GM10248 (cell line): ENCODE measurements at regions of chr6 and their contacts with region 1.

Region 1: GRCh38 chr6:26596579-26597388 is at the start of gene ABT1:
- DNase-seq: peak; percentile 96
- CTCF ChIP-seq: no peak

Region 2: DNA sequence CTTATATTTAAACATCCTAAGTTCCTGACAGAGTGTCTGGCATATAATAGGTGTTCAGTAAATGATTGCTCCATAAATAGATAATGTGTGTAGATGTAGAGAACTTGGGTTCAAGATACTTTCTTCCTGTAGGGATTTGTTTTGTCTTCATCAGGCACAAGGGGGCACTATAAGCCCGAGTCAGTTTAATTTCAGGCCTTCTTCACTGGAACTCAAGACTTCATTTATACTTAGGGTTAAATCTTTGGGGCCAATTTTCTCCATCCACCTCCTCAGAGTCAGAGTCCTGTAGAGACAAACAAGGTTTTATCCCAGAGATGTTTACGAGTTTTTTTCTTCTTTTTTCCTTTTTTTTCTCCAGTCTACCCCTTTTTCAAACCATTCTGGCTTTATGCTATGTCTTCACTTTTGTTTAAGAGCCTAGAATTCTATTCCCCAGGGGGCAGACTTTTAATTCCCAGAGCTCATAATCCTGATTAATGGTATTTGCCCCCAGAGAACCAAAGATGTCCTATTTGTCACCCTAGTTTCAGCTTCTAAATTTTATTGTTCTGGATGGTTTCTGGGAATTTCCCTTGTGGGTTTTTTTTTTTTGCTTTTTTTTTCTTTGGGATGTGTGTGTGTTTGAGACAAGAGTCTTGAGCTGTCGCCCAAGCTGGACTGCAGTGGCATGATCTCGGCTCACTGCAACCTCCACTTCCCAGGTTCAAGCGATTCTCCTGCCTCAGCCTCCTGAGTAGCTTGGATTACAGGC is 421.2 kb before region 1 on chr6:
- CTCF ChIA-PET with region 1: interaction called, 11 read pairs
- POLR2A ChIA-PET with region 1: no interaction called
- DNase-seq: peak; percentile 59
- CTCF ChIP-seq: peak; percentile 59

Region 3: DNA sequence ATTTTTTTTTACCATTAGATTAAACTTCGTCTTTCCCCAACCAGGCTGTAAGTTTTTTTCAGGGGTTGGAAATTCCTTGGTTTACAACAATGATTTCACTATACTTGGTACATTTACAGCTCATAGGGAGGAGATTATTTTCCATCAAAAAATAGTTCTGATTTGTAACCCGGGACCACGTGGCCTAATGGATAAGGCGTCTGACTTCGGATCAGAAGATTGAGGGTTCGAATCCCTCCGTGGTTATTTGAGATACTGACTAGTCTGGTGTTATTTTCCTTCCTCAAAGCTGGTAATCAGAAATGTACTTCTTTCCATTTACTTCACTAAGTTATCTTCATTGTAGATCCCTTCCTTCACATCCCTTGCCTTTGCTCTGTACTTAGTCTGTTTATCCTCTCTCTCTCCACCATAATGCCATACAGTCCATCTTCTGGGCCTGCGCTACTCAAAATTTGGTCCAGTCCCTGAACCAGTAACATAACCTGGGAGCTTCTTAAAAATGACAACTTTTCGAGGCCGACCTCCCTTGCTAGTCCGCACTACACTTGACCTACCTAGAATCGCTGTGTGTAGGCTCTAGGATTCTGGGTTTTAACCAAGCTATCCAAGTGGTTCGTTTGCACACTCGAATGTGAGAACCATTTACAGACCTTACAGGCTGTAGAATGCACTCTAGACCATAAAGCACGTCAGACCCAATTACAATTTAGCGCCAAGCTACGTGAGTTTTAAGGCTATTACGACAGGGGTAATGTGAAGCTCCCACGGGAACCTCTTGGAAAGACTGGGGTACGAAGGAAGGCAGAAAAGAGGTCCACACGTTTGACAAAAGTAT is 273.9 kb before region 1 on chr6:
- CTCF ChIA-PET with region 1: interaction called, 10 read pairs
- POLR2A ChIA-PET with region 1: no interaction called
- DNase-seq: peak; percentile 37
- CTCF ChIP-seq: no peak

Region 4: DNA sequence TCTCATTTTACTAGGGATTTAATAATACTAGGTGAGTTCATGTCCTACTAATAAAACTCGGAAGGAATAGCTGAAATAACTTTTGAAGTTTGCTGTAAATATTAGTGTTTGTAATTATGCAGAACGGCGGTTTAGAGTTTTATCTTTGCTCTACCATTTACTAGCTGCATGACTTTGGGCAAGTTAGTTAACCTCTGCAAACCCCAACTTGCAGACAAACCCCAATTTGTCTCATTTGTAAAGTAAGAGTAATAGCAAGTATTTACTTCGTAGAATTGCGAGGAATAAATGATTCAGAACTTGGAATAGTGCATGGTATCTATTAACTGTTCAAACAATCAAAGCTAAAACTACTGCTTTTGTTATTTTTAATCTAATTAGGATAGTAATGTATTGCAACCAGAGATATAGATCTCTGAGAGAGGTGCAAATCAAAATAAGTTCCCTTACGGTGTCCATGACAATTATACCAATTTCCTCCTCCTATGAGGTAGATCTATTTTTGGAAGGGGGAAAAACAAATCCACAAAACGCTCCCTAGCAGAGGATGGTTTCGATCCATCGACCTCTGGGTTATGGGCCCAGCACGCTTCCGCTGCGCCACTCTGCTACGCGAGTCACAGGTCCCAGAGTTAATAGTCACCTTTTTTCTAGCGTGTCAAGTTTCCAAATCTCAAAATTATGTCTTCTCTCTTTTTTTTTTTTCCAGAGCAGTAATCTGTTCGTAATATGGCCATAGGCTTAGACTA is 266.8 kb before region 1 on chr6:
- CTCF ChIA-PET with region 1: interaction called, 11 read pairs
- POLR2A ChIA-PET with region 1: no interaction called
- DNase-seq: no peak
- CTCF ChIP-seq: no peak

Region 5: GRCh38 chr6:26342106-26343004 is 254.4 kb before region 1 on chr6:
- CTCF ChIA-PET with region 1: interaction called, 23 read pairs
- POLR2A ChIA-PET with region 1: no interaction called
- DNase-seq: no peak
- CTCF ChIP-seq: no peak

Region 6: GRCh38 chr6:26568601-26569432 is 28.0 kb before region 1 on chr6:
- CTCF ChIA-PET with region 1: interaction called, 280 read pairs
- POLR2A ChIA-PET with region 1: interaction called, 3 read pairs
- DNase-seq: peak; percentile 82
- CTCF ChIP-seq: peak; percentile 38